ENCODE measurements at regions of chr2 and their contacts with region 1.

Region 1: GRCh38 chr2:113233593-113234550 is 44.8 kb downstream of the PAX8 start:
- DNase-seq: no peak
- H3K4me3 ChIP-seq: no peak overlapping the region
- CTCF ChIP-seq: peak; percentile 37

Region 2: GRCh38 chr2:113219889-113220641 is 13.8 kb before region 1 on chr2:
- CTCF ChIA-PET with region 1: interaction called, 14 read pairs
- POLR2A ChIA-PET with region 1: no interaction called
- DNase-seq: no peak
- H3K4me3 ChIP-seq: no peak overlapping the region
- CTCF ChIP-seq: no peak

Region 3: GRCh38 chr2:113342650-113343049 is 108.8 kb after region 1 on chr2:
- CTCF ChIA-PET with region 1: no interaction called
- POLR2A ChIA-PET with region 1: no interaction called
- DNase-seq: no peak
- H3K4me3 ChIP-seq: no peak overlapping the region
- CTCF ChIP-seq: no peak

Measured in AG04449 (cell line).